ENCODE measurements at regions of chr1 and their contacts with region 1.

Region 1: GRCh38 chr1:2525920-2526823 is at the start of gene PANK4:
- DNase-seq: peak; percentile 85
- H3K4me3 Mint-ChIP-seq: peak within 1 kb of the TSS; percentile 91
- H3K27ac Mint-ChIP-seq: peak within 1 kb of the TSS; percentile 93
- H3K4me1 Mint-ChIP-seq: peaks cover 31% of the 10 kb centered on the region
- H3K27me3 Mint-ChIP-seq: peaks cover 18% of the 10 kb centered on the region
- total RNA-seq, gene PANK4: 49.1 and 52.2 TPM in 2 replicates

Region 2: GRCh38 chr1:2133039-2133878 is 392.9 kb before region 1 on chr1:
- intact Hi-C with region 1: loop called (anchors 5 kb)
- DNase-seq: peak; percentile 96
- H3K4me3 Mint-ChIP-seq: peak overlapping the region; percentile 76
- H3K27ac Mint-ChIP-seq: peak overlapping the region; percentile 52
- H3K4me1 Mint-ChIP-seq: peaks cover 8% of the 10 kb centered on the region
- H3K27me3 Mint-ChIP-seq: no peaks in the 10 kb centered on the region

Region 3: DNA sequence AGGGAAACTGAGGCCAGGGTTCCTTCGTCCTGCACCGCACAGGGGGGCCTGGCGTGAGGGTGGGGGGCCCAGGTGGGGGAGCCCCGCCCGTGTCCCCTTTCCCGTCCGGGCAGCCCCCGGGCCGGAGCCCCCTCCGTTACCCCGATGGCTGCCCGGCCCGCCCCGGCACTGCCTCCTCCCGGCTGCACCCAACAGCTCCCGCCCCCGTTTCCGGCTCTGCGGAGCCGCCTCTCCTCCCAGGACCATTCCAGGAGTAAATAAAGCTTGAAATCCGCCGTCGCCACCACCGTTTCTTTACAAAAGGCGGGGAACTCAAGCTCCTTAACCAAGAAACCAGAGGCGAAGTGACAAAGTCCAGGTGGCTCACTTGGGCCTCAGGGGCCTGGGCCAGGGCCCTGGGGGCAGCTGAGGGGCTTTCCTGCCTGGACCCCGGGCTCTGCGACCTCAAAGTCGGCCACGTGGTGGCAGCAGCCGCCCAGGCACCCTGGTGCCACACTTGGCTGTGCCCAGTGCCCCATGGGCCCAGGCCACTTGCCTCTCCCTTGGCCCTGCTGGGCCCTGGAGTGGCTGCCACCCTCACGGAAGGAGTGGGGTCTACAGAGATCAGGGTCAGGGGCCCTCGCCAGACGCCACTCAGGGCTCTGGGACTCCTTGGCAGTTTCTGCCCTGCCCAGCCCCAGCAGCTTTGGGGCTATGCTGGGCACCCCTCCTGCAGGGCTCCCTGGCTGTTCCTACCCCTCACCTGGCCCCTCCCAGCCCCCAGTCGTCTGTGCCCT is 331.1 kb before region 1 on chr1:
- intact Hi-C with region 1: loop called (anchors 2 kb)
- DNase-seq: peak; percentile 91
- H3K4me3 Mint-ChIP-seq: peak overlapping the region; percentile 84
- H3K27ac Mint-ChIP-seq: peak overlapping the region; percentile 92
- H3K4me1 Mint-ChIP-seq: peaks cover 16% of the 10 kb centered on the region
- H3K27me3 Mint-ChIP-seq: no peaks in the 10 kb centered on the region

Region 4: DNA sequence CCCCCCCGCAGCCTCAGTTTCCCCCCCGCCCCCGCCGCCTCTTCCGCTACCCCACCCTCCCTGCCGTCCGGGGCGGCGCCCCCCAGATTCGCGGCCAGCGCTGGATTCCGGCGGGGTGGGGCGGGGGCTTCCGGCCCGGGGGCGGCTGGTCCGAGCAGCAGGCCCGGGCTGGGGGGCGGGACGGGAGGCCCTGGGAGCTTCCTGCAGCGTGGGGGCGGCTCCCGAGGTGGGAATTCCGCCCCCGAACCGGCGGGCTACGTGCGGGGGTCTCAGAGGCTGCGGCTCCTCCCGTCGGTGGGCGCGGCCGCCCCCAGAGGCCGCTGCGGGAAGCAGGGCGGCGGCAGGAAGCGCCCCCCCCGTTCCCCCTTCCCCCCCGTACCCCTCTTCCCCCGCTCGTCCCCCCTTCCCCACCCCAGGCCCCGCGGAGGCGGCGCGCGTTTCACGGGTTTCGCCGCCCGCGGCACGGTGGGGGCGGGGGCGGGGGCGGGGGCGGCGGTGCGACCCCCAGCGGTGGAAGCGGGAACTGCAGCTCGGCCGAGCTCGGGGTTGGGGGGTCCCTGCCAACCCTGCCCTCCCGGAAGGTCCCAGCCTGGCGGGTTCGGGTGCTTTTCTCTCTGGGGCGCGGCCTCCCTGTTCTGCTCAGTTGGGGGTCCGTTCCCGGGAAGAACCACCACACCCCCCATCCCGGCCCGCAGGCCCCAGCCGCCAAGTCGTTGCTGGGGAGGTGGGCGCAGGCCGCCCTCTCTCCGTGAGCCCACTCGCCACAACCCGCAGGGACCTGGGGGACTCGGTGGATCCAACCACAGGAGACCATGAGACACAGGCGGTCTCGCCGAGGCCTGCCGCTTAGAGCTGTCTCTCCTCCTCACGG is 211.1 kb before region 1 on chr1:
- intact Hi-C with region 1: loop called (anchors 10 kb)
- DNase-seq: peak; percentile 42
- H3K4me3 Mint-ChIP-seq: no peak overlapping the region
- H3K27ac Mint-ChIP-seq: no peak overlapping the region
- H3K4me1 Mint-ChIP-seq: no peaks in the 10 kb centered on the region
- H3K27me3 Mint-ChIP-seq: no peaks in the 10 kb centered on the region

Region 5: GRCh38 chr1:2391041-2391930 is 134.9 kb before region 1 on chr1 and contains the starts of genes MORN1 and RER1:
- intact Hi-C with region 1: loop called (anchors 1 kb)
- DNase-seq: peak; percentile 99
- H3K4me3 Mint-ChIP-seq: peak within 1 kb of the TSS; percentile 84
- H3K27ac Mint-ChIP-seq: peak within 1 kb of the TSS; percentile 76
- H3K4me1 Mint-ChIP-seq: peaks cover 25% of the 10 kb centered on the region
- H3K27me3 Mint-ChIP-seq: no peaks in the 10 kb centered on the region
- total RNA-seq, gene MORN1: 7.5 and 8.0 TPM in 2 replicates
- total RNA-seq, gene RER1: 142 and 144 TPM in 2 replicates

Region 6: DNA sequence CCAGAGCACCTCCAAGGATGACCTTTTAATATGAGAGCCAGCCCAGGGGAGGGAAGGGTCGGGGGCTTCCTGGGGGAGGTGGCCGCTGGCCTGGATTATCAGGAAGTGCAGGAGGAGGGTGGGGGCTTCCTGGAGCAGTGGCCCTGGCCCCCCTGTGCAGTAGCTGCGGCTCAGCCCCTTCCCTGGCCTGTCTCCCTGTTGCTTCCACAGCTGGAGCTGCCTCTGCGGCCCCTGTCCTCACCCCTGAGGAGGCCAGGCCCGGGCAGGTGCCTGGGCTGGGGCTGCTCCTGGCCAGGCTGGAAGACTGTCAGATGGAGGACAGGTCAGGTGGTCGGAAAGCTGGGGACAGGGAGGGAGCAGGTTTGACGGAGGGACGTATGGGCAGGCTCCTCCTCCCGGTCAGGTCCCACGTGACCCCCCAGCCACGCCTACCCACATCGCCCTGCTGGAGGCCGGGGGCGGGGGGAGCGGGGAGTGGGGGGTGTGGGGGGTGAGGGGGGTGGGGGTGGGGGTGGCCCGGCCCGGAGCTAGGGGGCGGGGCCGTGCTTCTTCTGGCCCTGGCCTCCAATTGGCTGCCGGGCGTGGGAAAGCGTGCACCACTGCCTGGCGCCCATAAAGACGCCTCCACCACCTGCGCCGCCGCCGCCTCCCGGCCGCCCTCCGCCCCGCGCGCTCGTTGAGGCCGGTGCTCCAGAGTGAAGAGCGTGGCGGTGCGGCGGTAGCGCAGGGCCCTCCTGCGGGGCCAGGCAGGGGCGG is 19.8 kb after region 1 on chr1:
- intact Hi-C with region 1: loop called (anchors 1 kb)
- DNase-seq: peak; percentile 86
- H3K4me3 Mint-ChIP-seq: peak overlapping the region; percentile 85
- H3K27ac Mint-ChIP-seq: no peak overlapping the region
- H3K4me1 Mint-ChIP-seq: peaks cover 15% of the 10 kb centered on the region
- H3K27me3 Mint-ChIP-seq: peaks cover 7% of the 10 kb centered on the region

Region 7: DNA sequence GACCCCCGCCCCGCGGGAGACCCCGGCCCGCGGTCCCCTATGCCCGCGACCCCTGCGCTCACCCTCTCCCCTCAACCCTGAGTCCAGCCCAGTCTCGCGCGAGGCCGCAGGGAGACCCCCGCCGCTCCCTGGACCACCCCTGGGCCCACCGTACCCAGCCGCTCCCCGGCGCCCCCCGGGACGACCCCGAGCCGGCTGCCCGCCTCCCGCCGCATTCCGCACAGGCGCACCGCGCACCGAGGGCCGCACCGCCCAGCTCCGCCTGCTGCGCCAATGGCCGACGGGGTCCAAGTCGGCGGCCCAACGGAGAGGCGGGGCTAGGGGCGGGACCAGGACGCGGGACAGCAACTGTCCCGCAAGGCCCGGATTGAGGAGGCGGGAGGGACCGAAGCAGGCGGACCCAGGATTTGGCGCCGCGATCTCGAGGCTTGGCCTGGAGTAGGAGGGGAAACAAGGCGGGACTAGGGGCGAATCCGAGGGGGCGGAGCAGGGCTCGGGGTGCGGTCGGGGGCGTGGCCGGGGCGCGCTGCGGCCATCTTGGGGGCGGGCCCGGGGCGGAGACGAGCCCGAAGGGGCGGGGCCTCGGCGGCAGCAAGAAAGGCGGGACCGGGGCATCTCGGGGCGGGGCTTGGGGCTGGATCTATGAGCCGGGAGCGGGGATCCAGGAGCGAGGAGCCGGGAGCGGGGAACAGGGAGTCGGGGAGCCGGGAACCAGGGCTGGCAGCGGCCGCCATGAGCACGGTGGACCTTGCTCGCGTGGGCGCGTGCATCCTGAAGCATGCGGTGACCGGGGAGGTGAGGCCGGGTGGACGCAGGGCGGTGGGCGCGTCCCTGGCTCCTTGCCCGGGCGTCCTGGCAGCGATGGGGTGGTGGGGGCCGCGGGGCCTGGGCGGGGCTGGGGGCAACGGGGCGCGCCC is 60.2 kb after region 1 on chr1 and contains the start of gene PRXL2B:
- intact Hi-C with region 1: loop called (anchors 1 kb)
- DNase-seq: peak; percentile 98
- H3K4me3 Mint-ChIP-seq: peak within 1 kb of the TSS; percentile 84
- H3K27ac Mint-ChIP-seq: peak within 1 kb of the TSS; percentile 86
- H3K4me1 Mint-ChIP-seq: peaks cover 33% of the 10 kb centered on the region
- H3K27me3 Mint-ChIP-seq: no peaks in the 10 kb centered on the region
- total RNA-seq, gene PRXL2B: 26.5 and 28.4 TPM in 2 replicates

Region 8: GRCh38 chr1:2936559-2937515 is 410.7 kb after region 1 on chr1:
- intact Hi-C with region 1: no loop called
- DNase-seq: no peak
- H3K4me3 Mint-ChIP-seq: no peak overlapping the region
- H3K27ac Mint-ChIP-seq: no peak overlapping the region
- H3K4me1 Mint-ChIP-seq: no peaks in the 10 kb centered on the region
- H3K27me3 Mint-ChIP-seq: no peaks in the 10 kb centered on the region